Gastrocnemius medialis (tissue), 4 donors: ENCODE measurements at regions of chr1 and their contacts with region 1.

Region 1: DNA sequence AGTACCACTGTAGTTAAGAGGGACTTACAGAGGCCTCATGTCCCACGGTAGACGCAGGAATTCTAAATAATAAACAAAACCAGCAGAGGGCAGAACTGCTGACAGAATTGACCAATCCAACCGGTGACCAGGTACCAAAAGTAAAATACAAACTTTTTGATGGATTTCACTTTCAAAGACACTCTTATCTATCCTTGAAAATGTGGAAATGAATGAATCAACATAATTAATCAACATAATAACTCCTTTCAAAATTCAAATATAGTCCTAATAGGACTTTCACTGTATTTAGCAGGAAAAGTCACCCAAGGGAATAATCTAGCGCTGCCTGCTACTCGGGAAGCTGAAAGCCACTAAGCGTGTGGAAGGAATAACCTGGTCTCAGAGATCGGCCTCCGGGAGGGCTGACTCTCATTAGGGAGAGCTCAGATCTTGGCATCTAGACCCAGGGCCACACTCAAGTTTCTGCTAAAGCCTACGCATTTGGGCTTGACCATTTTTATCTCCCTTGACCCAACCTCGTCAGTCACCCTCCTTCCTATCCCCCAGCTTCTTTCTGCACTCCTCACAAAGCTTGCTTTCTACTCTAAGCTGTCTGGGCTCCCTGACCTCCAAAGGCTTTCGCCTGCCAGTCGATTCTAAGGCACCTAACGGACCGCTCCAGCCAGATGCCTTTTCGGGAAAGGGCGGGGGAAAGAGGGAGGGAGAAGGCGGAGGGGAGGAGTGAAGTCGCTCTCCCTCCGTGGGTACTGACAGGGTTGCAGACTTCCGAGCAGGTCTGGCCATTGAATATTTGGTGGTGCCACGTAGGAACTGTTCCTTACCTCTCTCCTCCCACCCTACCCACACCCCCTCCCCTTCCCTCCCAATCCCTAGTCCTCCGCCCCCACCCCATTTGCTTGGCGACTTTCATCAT is 1.6 kb downstream of the COL11A1 start:
- DNase-seq: no peak
- ATAC-seq: peak; percentile 60 to 69
- H3K4me3 ChIP-seq: peak overlapping the region; percentile 50 to 68 (median 54)
- H3K27ac ChIP-seq: no peak overlapping the region
- H3K4me1 ChIP-seq: peaks cover 0 to 26% of the 10 kb centered on the region in 2 donors
- H3K27me3 ChIP-seq: peaks cover 7 to 8% (median 8%) of the 10 kb centered on the region in 3 donors
- CTCF ChIP-seq: peak in 4 of 5 experiments; percentile 15 to 48 (median 41)
- POLR2A ChIP-seq: no peak

Region 2: GRCh38 chr1:103162360-103162759 is 55.7 kb after region 1 on chr1:
- in situ Hi-C with region 1: no loop called
- intact Hi-C with region 1: no loop called
- DNase-seq: no peak
- ATAC-seq: no peak
- H3K4me3 ChIP-seq: no peak overlapping the region
- H3K27ac ChIP-seq: no peak overlapping the region
- H3K4me1 ChIP-seq: no peaks in the 10 kb centered on the region
- H3K27me3 ChIP-seq: no peaks in the 10 kb centered on the region
- CTCF ChIP-seq: no peak
- POLR2A ChIP-seq: no peak

Region 3: DNA sequence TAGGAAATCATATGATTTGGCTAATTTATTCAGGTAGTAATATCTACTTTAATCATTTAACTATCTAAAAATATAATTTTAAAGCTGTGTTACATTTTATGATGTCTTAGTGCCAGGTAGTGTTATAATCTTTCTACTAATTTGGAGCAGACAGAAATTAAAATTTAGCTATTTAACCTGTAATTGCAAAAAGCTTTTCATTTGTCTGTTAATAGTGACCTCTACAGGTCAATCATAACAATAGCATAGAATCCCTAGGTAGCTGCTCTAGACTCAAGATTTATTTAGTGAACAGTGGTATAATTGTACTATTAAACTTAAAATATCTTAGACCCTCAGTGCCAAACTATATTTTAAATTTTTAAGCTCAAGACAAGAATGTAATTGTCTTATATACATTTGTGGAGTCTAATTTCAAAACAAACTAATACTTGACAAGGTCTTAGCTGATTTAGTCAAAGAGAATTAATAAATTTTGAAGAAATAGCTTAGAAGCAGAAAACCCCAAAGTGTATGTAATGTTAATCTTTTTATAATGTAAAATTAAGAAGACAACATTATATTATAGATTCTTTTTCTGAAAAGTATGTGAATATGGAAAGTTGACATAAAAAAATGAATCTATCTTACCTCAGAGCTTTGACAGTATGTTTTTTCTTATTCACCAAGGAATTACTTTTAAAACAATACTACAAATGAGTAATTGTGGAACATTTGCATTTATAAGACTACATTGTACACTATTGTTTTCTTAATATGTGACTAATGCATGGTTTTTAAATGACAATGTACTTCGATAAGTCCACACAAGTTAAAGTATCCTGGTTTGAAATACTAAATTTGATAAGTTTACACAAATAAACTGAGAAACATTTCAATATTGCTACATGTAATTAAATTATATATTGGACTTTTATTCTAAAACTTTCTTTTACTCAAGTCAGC is 354.7 kb after region 1 on chr1:
- in situ Hi-C with region 1: loop called in 1 of 4 experiments (anchors 25 kb)
- intact Hi-C with region 1: loop called (anchors 5 kb)
- DNase-seq: no peak
- ATAC-seq: no peak
- H3K4me3 ChIP-seq: no peak overlapping the region
- H3K27ac ChIP-seq: no peak overlapping the region
- H3K4me1 ChIP-seq: no peaks in the 10 kb centered on the region
- H3K27me3 ChIP-seq: no peaks in the 10 kb centered on the region
- CTCF ChIP-seq: peak in 2 of 5 experiments; percentile 12 to 44
- POLR2A ChIP-seq: no peak

Region 4: DNA sequence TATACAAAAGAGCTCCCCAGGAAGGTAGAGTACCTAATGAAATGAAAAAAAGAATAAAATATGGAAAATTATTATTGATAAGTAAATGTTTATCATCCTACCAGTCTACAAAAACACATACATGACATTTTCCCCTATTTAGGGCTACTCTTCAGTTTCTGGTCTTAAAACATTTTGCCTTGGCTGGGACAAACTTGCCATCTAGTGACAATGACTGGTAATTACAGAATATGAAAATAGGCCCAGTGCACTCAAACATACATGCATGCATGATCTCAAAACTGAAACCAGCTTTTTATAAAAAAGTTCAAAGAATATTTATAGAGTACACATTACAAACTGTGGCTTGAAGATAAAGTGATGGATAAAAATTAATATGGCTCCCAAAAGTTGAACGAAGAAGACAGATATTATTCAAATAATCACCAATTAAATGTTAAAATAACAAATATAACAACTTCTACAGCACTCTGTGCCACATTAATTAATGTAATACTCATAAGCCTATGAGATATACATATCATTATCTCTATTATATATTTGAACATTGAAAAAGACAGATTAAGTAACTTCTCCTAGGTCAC is 408.3 kb after region 1 on chr1:
- in situ Hi-C with region 1: loop called in 2 of 4 experiments (anchors 10 to 25 kb)
- intact Hi-C with region 1: loop called (anchors 2 kb)
- DNase-seq: no peak
- ATAC-seq: peak in 1 of 2 donors; percentile 78
- H3K4me3 ChIP-seq: no peak overlapping the region
- H3K27ac ChIP-seq: no peak overlapping the region
- H3K4me1 ChIP-seq: no peaks in the 10 kb centered on the region
- H3K27me3 ChIP-seq: no peaks in the 10 kb centered on the region
- CTCF ChIP-seq: peak; percentile 42 to 78 (median 71)
- POLR2A ChIP-seq: no peak